ENCODE measurements at regions of chr12 and their contacts with region 1.

Region 1: GRCh38 chr12:27243804-27244683 is at the start of gene STK38L:
- DNase-seq: peak; percentile 99
- total RNA-seq, gene STK38L: 269 TPM

Region 2: DNA sequence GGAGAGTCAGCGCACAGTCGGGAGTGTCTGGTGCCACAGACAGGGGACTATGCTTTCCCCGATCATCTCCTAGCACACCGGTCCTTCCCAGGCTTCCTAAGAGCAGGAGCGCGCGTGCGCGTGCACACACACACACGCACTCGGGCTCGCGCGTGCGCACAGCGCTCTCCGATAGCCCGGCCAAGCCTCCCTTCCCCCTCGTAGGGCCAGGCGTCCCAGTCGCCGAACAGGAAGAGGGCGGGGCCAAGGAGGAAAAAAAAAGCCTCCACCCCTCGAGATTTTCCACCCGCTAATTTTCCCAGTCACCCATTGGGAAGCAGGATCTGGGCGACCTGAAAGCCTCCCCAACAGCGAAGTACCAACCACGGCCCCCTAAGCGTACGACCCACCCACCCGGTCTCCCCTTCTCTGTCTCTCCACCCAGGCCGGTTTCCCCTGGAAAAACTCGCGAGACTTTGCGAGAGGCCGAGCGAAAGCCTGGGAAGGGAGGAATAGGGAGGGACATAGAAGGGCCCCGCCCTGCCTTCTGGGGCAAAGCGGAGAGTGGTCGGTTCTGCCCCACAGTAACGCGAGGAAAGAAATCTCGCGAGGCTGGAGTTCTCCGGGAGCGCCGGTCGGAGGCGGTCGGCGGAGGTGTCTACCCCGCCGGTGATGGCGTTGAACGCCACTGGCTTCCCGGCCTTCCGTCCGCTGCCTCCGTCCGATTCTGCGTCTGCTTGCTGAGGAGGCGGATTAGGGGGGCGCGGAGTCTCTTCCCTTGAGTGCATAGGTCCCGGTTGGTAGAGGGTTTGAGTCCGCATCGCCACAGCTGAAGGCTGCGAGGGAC is 306.0 kb before region 1 on chr12 and contains the starts of genes FGFR1OP2 and INTS13:
- intact Hi-C with region 1: loop called (anchors 2 kb)
- DNase-seq: peak; percentile 99
- total RNA-seq, gene FGFR1OP2: 37.4 TPM
- total RNA-seq, gene INTS13: 15.5 TPM

Region 3: GRCh38 chr12:27024291-27024690 is 219.8 kb before region 1 on chr12:
- intact Hi-C with region 1: loop called (anchors 10 kb)
- DNase-seq: no peak

Region 4: GRCh38 chr12:27284751-27285150 is 40.7 kb after region 1 on chr12:
- intact Hi-C with region 1: loop called (anchors 5 kb)
- DNase-seq: no peak

Region 5: GRCh38 chr12:27319409-27319808 is 75.4 kb after region 1 on chr12:
- intact Hi-C with region 1: no loop called
- DNase-seq: no peak

Region 6: DNA sequence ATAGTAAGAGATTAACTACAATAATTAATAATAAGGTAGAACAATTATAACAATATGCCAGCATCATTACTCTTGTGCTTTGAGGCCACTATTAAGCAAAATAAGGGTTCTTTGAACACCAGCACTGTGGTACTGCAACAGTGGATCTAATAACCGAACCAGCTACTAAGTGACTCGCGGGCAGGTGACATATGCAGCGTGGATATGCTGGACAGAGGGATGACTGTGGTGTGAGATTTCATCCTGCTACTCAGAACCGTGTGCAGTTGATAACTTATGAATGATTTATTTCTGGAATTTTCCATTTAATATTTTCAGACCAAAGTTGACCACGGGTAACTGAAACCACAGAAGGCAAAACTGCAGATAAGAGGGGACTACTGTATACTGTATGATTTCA is 123.0 kb after region 1 on chr12:
- intact Hi-C with region 1: no loop called
- DNase-seq: no peak

Measured in cardiac septum (tissue), 1 donor.